Naive thymus-derived CD8-positive, alpha-beta T cell (primary cell): ENCODE measurements at regions of chr17 and their contacts with region 1.

Region 1: DNA sequence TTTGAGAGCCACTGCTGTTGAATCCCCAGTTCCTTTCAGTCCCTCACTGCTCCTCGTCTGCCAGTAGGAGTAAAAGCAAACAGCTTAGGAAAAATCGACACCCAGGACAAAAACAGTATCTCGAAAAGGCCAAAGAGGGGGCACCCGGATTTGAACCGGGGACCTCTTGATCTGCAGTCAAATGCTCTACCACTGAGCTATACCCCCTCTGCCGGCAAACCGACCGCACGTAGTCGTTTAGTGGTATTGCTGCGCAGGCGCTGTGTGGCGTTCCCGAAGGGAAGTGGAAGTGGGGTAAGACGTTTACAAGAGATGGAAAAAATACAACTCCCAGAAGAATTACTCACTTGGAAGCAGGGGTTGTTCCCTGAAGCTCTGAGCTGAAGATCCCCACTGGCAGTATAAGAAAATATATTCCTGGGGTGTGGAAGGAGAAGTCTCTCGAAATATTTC is 2.2 kb upstream of the PLXDC1 start:
- DNase-seq: peak; percentile 84 to 98 (median 92)
- ATAC-seq: peak; percentile 53 to 59
- H3K4me3 Mint-ChIP-seq: peak overlapping the region; percentile 97 to 100 (median 99)
- H3K27ac Mint-ChIP-seq: peak overlapping the region; percentile 91 to 100 (median 96)
- H3K4me1 Mint-ChIP-seq: peaks cover 40 to 52% (median 47%) of the 10 kb centered on the region in 4 donors
- H3K27me3 Mint-ChIP-seq: peaks cover 0 to 15% (median 0%) of the 10 kb centered on the region in 5 donors

Region 2: DNA sequence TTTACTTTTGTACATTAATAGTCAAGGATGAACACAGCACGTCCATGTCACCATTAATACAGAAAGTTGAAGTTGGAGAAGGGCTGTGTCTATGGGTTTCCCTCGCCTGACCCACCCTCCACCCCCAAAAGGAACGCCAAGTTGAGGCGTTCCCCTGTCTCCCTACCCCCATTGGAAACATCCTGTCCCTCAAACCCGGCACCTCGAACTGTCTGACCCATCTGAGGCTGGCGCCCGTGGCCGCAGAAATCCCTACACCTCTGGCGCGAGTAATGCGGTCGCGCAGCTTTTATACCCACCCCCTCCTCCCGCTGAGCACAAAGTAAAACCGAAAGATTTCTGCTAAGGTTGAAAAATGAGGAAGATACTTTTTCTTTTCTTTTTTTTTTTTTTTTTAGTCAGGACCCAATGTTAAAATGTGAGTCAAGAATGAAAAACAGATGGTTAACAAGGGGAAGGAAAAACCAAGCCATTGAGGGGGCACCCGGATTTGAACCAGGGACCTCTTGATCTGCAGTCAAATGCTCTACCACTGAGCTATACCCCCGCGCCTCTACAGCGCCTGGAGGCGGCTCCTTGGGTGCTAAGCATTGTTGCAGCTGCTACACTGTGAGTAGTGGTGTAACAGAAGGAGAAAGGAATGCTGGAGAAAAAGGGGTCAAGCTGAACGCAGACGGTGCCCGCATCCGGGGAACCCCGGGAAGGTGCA is 284.7 kb before region 1 on chr17:
- POLR2A ChIA-PET with region 1: interaction called, 50 read pairs
- DNase-seq: peak; percentile 69 to 93 (median 90)
- ATAC-seq: peak; percentile 52 to 70
- H3K4me3 Mint-ChIP-seq: peak overlapping the region; percentile 94 to 100 (median 98)
- H3K27ac Mint-ChIP-seq: peak overlapping the region; percentile 92 to 100 (median 96)
- H3K4me1 Mint-ChIP-seq: peaks cover 34 to 55% (median 47%) of the 10 kb centered on the region in 4 donors
- H3K27me3 Mint-ChIP-seq: peaks cover 0 to 1% (median 0%) of the 10 kb centered on the region in 5 donors

Region 3: DNA sequence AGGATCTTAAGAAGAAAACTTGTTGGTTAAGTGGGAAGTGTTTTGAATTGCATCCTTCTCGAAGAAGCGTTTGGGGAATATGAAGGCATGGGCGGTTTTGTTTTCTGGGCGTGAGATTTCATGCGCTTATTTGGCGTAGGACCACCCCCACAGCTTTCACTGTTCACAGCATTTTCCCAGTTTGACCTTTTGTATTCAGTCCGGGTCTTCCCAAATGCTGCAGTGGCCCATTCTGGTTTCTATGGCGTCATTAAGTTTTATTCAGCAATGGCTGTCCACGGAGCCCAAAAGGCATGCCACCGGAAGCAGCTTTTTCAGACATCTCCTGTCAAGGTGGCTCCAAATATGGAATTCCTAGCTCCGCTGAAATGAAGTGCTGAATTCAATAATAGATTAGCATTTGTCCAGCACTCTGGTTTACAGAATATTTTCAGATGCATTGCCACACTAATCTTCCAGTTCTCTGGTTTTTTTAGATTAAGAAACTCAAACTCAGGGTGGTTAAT is 95.9 kb before region 1 on chr17:
- POLR2A ChIA-PET with region 1: interaction called, 11 read pairs
- DNase-seq: no peak
- ATAC-seq: no peak
- H3K4me3 Mint-ChIP-seq: peak overlapping the region; percentile 65 to 91 (median 82)
- H3K27ac Mint-ChIP-seq: peak overlapping the region in 5 of 10 donors; percentile 18 to 91 (median 81)
- H3K4me1 Mint-ChIP-seq: peaks cover 3 to 24% (median 11%) of the 10 kb centered on the region in 4 donors
- H3K27me3 Mint-ChIP-seq: peaks cover 0 to 4% (median 2%) of the 10 kb centered on the region in 5 donors

Region 4: DNA sequence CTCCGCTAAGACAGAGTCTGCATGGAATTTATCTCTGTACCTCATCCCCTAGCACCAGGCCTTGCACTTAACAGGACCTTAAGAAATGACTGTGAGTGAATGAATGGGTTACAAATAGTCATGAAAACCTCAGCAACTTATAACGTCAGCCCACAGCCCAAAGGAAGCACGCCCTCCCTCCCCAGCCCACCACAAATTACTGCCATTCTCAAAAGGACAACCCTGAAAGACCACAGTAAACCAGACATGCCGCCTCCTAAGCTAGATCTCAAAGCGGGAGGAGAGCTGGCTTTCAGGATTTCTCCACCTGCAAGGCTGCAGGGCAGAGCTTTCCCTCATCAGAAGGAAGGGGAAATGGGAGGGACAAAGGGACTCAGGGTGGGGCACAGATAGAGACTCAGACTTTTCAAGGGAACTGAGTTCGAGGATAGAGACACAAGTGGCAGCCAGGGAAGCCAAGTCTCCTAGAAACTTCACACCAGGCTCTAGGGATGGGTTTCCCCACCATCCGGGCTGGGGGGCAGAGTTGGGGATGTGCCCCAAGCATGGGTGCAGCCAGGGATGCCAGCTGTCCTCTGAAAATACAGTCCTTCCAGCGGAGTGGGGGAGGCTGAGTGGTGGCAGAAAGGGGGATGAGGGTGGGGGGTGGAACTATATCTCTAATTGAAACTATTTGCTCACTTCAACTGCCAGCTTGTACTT is 58.9 kb before region 1 on chr17:
- POLR2A ChIA-PET with region 1: interaction called, 94 read pairs
- DNase-seq: peak in 8 of 10 donors; percentile 11 to 79 (median 64)
- ATAC-seq: peak; percentile 37 to 60
- H3K4me3 Mint-ChIP-seq: peak overlapping the region; percentile 62 to 88 (median 84)
- H3K27ac Mint-ChIP-seq: peak overlapping the region; percentile 89 to 99 (median 96)
- H3K4me1 Mint-ChIP-seq: peaks cover 60 to 94% (median 90%) of the 10 kb centered on the region in 4 donors
- H3K27me3 Mint-ChIP-seq: no peaks in the 10 kb centered on the region

Region 5: DNA sequence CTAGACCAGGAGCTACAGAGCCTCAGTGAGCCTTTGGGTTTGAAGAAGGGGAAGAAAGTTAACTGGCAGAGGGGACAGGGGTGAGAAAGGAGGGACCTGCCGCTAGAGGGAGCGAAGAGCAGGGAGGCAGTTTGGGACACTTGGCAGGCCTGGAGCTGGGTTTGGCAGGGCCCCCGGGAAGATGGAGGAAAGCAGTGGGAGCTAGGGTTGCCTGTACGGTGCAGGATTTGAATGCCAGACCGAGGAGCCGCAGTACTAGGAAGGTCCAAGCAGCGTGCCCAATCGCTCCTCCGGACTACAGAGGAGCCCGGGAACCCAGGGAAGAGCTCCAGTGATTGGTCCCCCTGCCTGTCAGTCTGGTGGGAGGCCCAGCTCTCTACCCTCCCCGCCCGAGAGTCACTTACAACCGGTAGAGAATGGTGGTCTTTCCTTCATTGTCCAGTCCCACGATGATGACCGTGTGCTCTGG is 11.1 kb after region 1 on chr17:
- POLR2A ChIA-PET with region 1: interaction called, 29 read pairs
- DNase-seq: peak; percentile 56 to 87 (median 72)
- ATAC-seq: peak; percentile 92 to 95
- H3K4me3 Mint-ChIP-seq: peak overlapping the region; percentile 87 to 97 (median 95)
- H3K27ac Mint-ChIP-seq: peak overlapping the region in 9 of 10 donors; percentile 17 to 82 (median 63)
- H3K4me1 Mint-ChIP-seq: peaks cover 12 to 34% (median 23%) of the 10 kb centered on the region in 4 donors
- H3K27me3 Mint-ChIP-seq: peaks cover 3 to 17% (median 7%) of the 10 kb centered on the region in 5 donors

Region 6: GRCh38 chr17:39199820-39200069 is 46.1 kb after region 1 on chr17:
- POLR2A ChIA-PET with region 1: interaction called, 22 read pairs
- DNase-seq: peak in 9 of 10 donors; percentile 67 to 95 (median 86)
- ATAC-seq: peak; percentile 62 to 71
- H3K4me3 Mint-ChIP-seq: peak overlapping the region; percentile 86 to 99 (median 96)
- H3K27ac Mint-ChIP-seq: peak overlapping the region; percentile 98 to 100 (median 99)
- H3K4me1 Mint-ChIP-seq: peaks cover 23 to 74% (median 62%) of the 10 kb centered on the region in 4 donors
- H3K27me3 Mint-ChIP-seq: no peaks in the 10 kb centered on the region